GM12878 (cell line): ENCODE measurements at regions of chr17 and their contacts with region 1.

Region 1: DNA sequence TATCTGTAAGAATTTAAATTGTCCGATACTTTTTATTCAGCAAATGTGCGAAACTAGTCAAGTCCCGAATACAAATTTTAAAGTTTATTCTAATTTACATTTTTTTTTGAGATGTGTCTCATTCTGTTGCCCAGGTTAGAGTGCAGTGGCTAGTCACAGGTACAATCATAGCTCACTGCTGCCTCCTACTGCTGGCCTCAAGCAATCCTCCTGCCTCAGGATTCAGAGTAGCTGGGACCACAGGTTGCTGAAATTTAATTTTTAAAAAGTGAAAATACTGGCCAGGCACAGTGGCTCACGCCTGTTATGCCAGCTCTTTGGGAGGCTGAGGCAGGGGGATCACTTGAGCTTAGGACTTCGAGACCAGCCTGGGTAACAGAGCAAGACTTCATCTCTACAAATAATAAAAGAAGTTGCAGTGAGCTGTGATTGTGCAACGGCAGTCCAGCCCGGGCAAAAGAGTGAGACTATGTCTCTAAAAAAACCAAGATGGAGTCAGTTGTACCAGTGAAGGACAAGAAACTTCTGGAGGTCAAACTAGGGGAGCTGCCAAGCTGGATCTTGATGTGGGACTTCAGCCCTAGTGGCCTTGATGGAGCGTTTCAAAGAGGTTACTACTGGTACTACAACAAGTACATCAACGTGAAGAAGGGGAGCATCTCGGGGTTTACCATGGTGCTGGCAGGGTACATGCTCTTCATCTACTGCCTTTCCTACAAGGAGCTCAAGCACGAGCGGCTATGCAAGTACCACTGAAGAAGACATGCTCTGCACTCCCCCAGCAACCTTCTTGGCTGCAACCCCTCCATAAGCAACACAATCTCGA is 5.6 kb downstream of the POLG2 start:
- DNase-seq: no peak
- ATAC-seq: peak; percentile 85
- H3K4me3 ChIP-seq: no peak overlapping the region
- H3K27ac ChIP-seq: no peak overlapping the region
- H3K4me1 ChIP-seq: no peaks in the 10 kb centered on the region; the same call in 1 of the 2 replicates
- H3K27me3 ChIP-seq: no peaks in the 10 kb centered on the region
- CTCF ChIP-seq: peak; percentile 44 to 69 (median 68)
- EP300 ChIP-seq: no peak
- POLR2A ChIP-seq: no peak
- RAD21 ChIP-seq: peak; percentile 66

Region 2: GRCh38 chr17:64281962-64282727 is 209.1 kb before region 1 on chr17:
- CTCF ChIA-PET with region 1: no interaction called
- POLR2A ChIA-PET with region 1: no interaction called
- RAD21 ChIA-PET with region 1: no interaction called
- SMC1A ChIA-PET with region 1: no interaction called
- in situ Hi-C with region 1: no loop called
- intact Hi-C with region 1: no loop called
- DNase-seq: peak; percentile 17
- ATAC-seq: peak; percentile 63
- H3K4me3 ChIP-seq: no peak overlapping the region
- H3K27ac ChIP-seq: no peak overlapping the region
- H3K4me1 ChIP-seq: peaks cover 12% of the 10 kb centered on the region
- H3K27me3 ChIP-seq: no peaks in the 10 kb centered on the region; a peak in 1 of 4 replicates
- CTCF ChIP-seq: peak; percentile 70 to 74 (median 74)
- EP300 ChIP-seq: no peak
- POLR2A ChIP-seq: no peak
- RAD21 ChIP-seq: peak; percentile 97

Region 3: GRCh38 chr17:64306850-64307463 is 184.3 kb before region 1 on chr17:
- CTCF ChIA-PET with region 1: interaction called, 3 read pairs
- POLR2A ChIA-PET with region 1: no interaction called
- RAD21 ChIA-PET with region 1: no interaction called
- SMC1A ChIA-PET with region 1: interaction called, 5 read pairs
- in situ Hi-C with region 1: no loop called
- intact Hi-C with region 1: loop called (anchors 5 kb)
- DNase-seq: no peak
- ATAC-seq: peak; percentile 83
- H3K4me3 ChIP-seq: no peak overlapping the region
- H3K27ac ChIP-seq: no peak overlapping the region
- H3K4me1 ChIP-seq: no peaks in the 10 kb centered on the region
- H3K27me3 ChIP-seq: no peaks in the 10 kb centered on the region
- CTCF ChIP-seq: peak; percentile 64 to 86 (median 84)
- EP300 ChIP-seq: no peak
- POLR2A ChIP-seq: no peak
- RAD21 ChIP-seq: peak; percentile 68

Region 4: DNA sequence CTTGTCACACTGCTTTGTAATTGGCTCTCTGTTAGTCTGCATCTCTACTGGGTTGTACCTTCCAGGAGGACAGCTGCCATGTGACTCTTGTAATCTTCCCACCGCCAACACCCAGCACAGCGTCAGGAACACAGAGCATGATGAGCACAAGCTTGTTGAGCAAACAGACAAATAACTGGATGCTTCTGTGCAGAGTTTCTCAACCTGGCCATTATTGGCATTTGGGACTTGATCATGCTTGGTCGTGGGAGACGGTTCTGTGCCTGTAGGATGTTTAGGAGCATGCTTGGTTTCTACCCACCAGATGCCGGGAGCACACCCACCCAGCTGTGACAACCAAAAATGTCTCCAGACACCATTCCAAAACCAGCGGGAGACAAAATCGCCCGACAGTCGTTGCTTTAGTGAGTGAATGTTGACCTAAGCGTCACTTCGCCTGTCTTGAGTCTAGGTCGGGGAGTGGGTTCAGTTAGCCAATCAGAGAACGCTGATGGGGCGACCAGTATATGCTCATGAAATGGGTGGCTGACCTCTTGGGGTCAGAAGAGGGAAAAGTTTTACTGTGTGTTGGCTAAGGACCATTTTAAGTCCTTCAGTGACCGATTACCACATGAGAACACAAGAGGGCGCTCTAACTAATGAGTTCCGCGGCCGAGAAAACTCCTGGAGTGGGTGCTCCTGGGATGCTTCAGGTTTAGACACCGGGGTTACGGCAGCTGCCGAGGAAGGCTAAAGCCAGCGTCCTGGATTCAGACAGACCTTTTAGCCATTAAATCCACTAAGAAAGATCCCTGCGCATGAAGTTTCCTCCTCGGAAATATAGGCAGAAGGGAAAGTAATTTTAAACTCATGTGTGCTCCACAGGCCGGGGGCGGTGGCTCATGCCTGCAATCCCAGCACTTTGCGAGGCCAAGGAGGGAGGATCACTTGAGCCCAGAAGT is 170.4 kb before region 1 on chr17:
- CTCF ChIA-PET with region 1: interaction called, 8 read pairs
- POLR2A ChIA-PET with region 1: no interaction called
- RAD21 ChIA-PET with region 1: interaction called, 3 read pairs
- SMC1A ChIA-PET with region 1: interaction called, 3 read pairs
- in situ Hi-C with region 1: loop called (anchors 5 kb)
- intact Hi-C with region 1: loop called (anchors 5 kb)
- DNase-seq: no peak
- ATAC-seq: peak; percentile 82
- H3K4me3 ChIP-seq: no peak overlapping the region
- H3K27ac ChIP-seq: no peak overlapping the region
- H3K4me1 ChIP-seq: no peaks in the 10 kb centered on the region
- H3K27me3 ChIP-seq: no peaks in the 10 kb centered on the region; a peak in 1 of 4 replicates
- CTCF ChIP-seq: peak; percentile 71 to 78 (median 75)
- EP300 ChIP-seq: no peak
- POLR2A ChIP-seq: no peak
- RAD21 ChIP-seq: peak; percentile 84

Region 5: GRCh38 chr17:64431534-64431933 is 59.7 kb before region 1 on chr17:
- CTCF ChIA-PET with region 1: interaction called, 11 read pairs
- POLR2A ChIA-PET with region 1: no interaction called
- RAD21 ChIA-PET with region 1: interaction called, 3 read pairs
- SMC1A ChIA-PET with region 1: interaction called, 4 read pairs
- in situ Hi-C with region 1: no loop called
- intact Hi-C with region 1: no loop called
- DNase-seq: no peak
- ATAC-seq: no peak
- H3K4me3 ChIP-seq: no peak overlapping the region
- H3K27ac ChIP-seq: no peak overlapping the region
- H3K4me1 ChIP-seq: no peaks in the 10 kb centered on the region
- H3K27me3 ChIP-seq: no peaks in the 10 kb centered on the region
- CTCF ChIP-seq: no peak
- EP300 ChIP-seq: no peak
- POLR2A ChIP-seq: no peak
- RAD21 ChIP-seq: no peak

Region 6: DNA sequence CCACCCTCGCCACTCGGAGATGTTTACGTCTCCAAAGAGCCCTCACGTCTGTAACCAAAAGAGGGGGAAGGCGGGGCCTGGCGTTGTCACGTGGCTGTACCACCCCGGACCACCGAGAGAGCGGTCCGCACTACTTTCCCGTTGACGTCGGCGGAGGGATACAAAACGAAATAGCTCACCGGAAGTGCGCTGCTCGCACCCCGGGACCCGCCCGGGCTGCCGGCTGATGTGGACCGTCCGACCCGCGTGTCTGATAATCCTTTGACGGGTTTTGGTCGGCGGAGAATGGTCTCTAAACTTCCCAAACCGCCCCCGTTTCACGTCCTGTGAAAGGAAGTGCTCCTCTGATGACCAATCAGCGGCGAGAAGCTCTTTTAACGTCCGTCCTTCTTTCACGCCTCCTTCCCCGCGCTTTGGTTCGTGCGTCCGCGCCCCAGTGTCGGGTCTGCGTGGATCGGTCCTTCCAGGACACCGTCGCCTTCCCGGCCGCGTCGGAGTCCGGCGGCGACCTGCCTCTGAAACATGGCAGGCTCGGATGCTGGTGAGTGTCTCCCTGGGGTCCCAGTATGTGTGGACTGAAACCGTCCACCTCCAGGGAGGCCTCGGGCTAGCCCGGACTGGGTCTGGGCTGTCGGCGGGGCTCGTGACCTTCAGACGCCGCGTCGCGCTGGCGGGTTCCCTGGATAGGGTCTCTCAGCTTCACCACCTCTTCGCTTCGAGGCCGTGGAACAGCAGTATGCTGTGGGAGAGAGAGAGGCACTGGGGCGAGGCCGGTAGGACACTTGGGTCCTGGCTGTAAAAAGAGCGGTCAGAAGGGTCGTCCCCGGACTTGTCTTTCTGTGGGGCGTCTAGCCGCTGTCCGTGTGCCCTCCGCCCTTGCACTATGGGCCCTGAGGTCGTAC is 15.6 kb after region 1 on chr17 and contains the start of gene CEP95:
- CTCF ChIA-PET with region 1: interaction called, 89 read pairs
- POLR2A ChIA-PET with region 1: interaction called, 64 read pairs
- RAD21 ChIA-PET with region 1: interaction called, 11 read pairs
- SMC1A ChIA-PET with region 1: interaction called, 25 read pairs
- in situ Hi-C with region 1: no loop called
- intact Hi-C with region 1: no loop called
- DNase-seq: peak; percentile 90
- ATAC-seq: peak; percentile 75
- H3K4me3 ChIP-seq: peak within 1 kb of the TSS; percentile 100
- H3K27ac ChIP-seq: peak within 1 kb of the TSS; percentile 100
- H3K4me1 ChIP-seq: peaks cover 4% of the 10 kb centered on the region; the same call in 1 of the 2 replicates
- H3K27me3 ChIP-seq: no peaks in the 10 kb centered on the region
- CTCF ChIP-seq: no peak
- EP300 ChIP-seq: 0 out of 4 replicates have a peak, but pooled peaks have one; percentile 9 to 20
- POLR2A ChIP-seq: peak; percentile 90
- RAD21 ChIP-seq: no peak
- polyA plus RNA-seq, gene CEP95: 17.7 to 22.6 TPM